Activated CD4-positive, alpha-beta T cell treated with anti-CD3 and anti-CD28 coated beads for 36 hours (primary cell): ENCODE measurements at regions of chr18 and their contacts with region 1.

Region 1: GRCh38 chr18:2571200-2572143 is at the starts of genes METTL4 and NDC80:
- DNase-seq: peak; percentile 91
- ATAC-seq: peak; percentile 84
- H3K4me3 Mint-ChIP-seq: peak within 1 kb of the TSS; percentile 98
- H3K27ac Mint-ChIP-seq: peak within 1 kb of the TSS; percentile 95
- H3K4me1 Mint-ChIP-seq: peaks cover 55% of the 10 kb centered on the region
- H3K27me3 Mint-ChIP-seq: no peaks in the 10 kb centered on the region
- total RNA-seq, gene METTL4: 12.8 to 22.0 TPM
- total RNA-seq, gene NDC80: 84.7 to 88.5 TPM

Region 2: DNA sequence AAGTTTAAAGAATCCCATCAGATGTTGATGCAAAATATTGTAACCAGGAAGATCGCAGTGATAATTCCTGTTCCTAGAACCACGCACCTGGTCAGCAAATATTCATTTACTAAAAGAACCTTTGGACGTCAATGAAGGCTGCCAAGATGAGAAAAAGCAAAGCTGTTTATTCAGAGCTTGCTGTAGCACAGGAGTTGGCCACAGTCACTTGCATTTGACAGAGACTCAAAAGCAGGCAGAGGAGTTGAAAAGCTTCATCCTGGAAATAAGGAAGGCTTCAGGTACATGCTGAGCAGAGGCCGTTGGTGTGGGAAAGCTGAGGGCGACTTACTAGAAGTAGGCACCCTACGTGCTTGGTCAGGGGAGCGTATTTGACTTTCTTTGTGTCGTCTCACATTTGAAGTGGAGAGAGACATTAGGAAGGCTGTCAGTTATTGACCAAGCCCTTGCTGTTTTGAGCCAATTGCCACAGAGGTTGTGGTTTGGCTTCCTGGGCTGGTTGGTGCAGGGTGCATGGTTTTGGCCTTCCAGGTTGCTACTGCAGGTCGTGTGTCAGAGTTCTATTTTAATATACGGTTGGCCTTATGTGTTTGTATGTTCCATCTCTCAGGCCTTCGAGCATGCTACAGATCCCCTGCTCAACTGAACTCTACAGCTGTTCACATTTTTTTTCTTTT is 289.8 kb before region 1 on chr18:
- CTCF ChIA-PET with region 1: no interaction called
- POLR2A ChIA-PET with region 1: no interaction called
- intact Hi-C with region 1: no loop called
- DNase-seq: no peak
- ATAC-seq: no peak
- H3K4me3 Mint-ChIP-seq: no peak overlapping the region
- H3K27ac Mint-ChIP-seq: no peak overlapping the region
- H3K4me1 Mint-ChIP-seq: no peaks in the 10 kb centered on the region
- H3K27me3 Mint-ChIP-seq: no peaks in the 10 kb centered on the region

Region 3: GRCh38 chr18:2641638-2642037 is 70.2 kb after region 1 on chr18:
- CTCF ChIA-PET with region 1: no interaction called
- POLR2A ChIA-PET with region 1: interaction called, 5 read pairs
- intact Hi-C with region 1: loop called (anchors 1 to 5 kb)
- DNase-seq: no peak
- ATAC-seq: peak; percentile 71
- H3K4me3 Mint-ChIP-seq: peak overlapping the region; percentile 63
- H3K27ac Mint-ChIP-seq: no peak overlapping the region
- H3K4me1 Mint-ChIP-seq: peaks cover 51% of the 10 kb centered on the region
- H3K27me3 Mint-ChIP-seq: no peaks in the 10 kb centered on the region

Region 4: DNA sequence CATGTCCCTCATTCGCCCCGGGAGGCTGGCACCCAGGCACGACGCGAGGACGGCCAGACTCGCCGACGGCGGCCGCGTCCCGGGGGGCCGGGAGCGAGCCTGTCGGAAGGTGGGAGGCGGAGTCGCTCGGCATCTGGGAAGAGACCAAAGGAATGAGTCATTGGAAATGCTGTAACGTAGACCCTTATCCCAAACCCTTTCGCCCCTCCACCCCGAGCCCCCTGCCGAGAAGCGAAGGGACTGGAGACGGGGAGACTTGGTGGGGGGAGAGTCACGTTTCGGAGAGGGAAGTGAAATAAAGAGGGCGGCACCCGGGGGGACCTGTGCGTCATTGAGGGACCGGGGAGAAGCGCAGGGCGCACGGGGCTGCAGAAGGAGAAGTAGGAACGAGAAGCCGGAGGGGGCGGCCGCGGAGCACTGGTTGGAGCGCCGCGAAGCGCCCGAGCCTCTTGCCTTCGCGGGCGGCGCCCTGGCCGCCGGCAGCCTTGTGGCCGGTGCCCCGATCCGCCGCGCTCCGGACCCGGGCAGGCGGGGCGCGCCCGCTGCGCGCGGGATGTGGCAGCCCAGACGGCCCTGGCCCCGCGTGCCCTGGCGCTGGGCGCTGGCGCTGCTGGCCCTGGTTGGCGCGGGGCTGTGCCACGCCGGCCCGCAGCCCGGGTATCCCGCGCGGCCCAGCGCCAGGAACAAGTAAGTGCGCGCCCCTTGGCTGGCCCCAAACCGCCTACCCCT is 275.3 kb after region 1 on chr18 and contains the start of gene EMILIN2:
- CTCF ChIA-PET with region 1: no interaction called
- POLR2A ChIA-PET with region 1: no interaction called
- intact Hi-C with region 1: loop called in 1 of 2 experiments (anchors 5 kb)
- DNase-seq: peak; percentile 73
- ATAC-seq: peak; percentile 21
- H3K4me3 Mint-ChIP-seq: peak within 1 kb of the TSS; percentile 76
- H3K27ac Mint-ChIP-seq: peak within 1 kb of the TSS; percentile 64
- H3K4me1 Mint-ChIP-seq: peaks cover 36% of the 10 kb centered on the region
- H3K27me3 Mint-ChIP-seq: peaks cover 34% of the 10 kb centered on the region
- total RNA-seq, gene EMILIN2: 12.0 to 15.7 TPM

Region 5: DNA sequence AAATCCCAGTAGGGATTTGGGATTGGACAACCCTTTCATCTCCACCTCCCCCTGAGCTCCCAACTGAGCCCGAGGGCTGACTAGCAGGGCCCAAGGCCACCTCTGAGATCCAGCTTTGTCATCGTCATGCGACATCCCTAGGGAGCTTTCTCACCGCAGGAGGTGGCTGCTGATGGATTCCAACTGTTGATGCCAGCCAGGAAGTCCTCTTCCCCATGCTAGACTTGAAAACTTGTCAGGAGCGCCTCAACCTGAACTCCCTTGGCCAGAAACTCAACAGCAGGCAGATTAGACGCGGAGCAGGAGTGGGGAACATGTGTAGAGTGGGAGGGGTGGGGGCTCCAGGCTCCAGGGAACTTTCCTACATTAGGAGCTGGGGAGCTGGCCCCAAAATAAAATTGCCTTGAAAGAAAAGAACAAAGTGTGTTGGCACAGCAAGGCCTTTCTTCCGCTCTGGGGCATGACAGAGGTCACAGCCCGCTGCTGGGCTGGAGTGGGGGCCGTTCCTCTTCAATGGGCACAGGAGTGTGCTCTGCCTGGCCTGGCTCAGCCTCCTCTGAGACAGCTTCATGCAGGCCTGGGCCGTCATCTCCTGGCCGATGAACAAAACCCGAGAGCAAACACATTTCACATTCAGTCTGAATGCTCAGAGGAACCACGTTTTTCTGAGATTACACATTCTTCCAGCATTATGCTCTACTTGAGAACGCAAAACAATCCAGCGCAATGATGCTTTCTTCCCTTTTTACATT is 309.8 kb after region 1 on chr18:
- CTCF ChIA-PET with region 1: no interaction called
- POLR2A ChIA-PET with region 1: no interaction called
- intact Hi-C with region 1: no loop called
- DNase-seq: no peak
- ATAC-seq: peak; percentile 32
- H3K4me3 Mint-ChIP-seq: peak overlapping the region; percentile 49
- H3K27ac Mint-ChIP-seq: peak overlapping the region; percentile 53
- H3K4me1 Mint-ChIP-seq: peaks cover 25% of the 10 kb centered on the region
- H3K27me3 Mint-ChIP-seq: no peaks in the 10 kb centered on the region

Region 6: DNA sequence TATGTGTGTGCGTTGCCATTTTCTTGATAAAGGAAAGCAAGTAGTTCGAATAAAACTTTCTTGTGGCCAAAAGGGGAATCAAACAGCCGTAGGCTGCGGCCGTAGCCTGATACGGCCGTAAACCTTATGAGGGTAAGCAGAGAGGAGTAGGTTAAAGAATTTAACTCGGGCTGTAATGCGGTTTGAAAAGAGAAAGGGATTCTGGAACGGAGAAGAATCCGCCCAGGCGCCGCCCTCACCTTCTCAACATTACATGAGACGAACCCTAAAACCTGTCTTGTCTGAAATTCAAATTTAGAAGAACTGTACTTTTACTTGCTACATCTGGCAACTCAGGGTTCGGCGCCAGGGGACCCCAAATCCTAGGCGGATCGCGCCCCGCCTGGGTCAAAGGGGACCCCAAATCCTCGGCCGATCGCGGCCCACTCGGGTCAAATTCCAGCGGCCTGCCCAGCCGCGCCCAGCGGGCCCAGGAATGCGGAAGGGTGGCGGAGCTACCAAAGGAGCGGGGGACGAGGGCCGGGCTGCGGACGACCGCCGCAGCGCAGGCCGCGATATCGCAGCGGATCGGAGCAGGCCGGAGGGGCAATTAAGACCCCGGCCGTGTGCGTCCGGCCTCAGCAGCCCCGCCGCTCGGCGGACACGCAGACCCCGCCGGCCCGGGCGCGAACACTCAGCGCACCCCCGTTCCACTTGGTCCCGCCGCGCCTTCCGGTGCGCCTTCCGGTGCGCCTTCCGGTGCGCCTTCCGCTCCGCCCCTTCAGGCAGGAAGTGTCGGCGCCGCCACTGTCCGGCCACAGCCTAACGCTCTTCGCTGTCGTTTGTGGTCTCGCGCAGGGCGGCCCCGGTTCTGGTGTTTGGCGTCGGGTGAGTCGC is 690.1 kb after region 1 on chr18 and contains the start of gene MYL12B:
- CTCF ChIA-PET with region 1: no interaction called
- POLR2A ChIA-PET with region 1: no interaction called
- intact Hi-C with region 1: loop called in 1 of 2 experiments (anchors 5 kb)
- DNase-seq: peak; percentile 88
- ATAC-seq: peak; percentile 77
- H3K4me3 Mint-ChIP-seq: peak within 1 kb of the TSS; percentile 88
- H3K27ac Mint-ChIP-seq: peak within 1 kb of the TSS; percentile 96
- H3K4me1 Mint-ChIP-seq: peaks cover 59% of the 10 kb centered on the region
- H3K27me3 Mint-ChIP-seq: no peaks in the 10 kb centered on the region
- total RNA-seq, gene MYL12B: 282 to 301 TPM